ENCODE measurements at regions of chr19 and their contacts with region 1.

Region 1: DNA sequence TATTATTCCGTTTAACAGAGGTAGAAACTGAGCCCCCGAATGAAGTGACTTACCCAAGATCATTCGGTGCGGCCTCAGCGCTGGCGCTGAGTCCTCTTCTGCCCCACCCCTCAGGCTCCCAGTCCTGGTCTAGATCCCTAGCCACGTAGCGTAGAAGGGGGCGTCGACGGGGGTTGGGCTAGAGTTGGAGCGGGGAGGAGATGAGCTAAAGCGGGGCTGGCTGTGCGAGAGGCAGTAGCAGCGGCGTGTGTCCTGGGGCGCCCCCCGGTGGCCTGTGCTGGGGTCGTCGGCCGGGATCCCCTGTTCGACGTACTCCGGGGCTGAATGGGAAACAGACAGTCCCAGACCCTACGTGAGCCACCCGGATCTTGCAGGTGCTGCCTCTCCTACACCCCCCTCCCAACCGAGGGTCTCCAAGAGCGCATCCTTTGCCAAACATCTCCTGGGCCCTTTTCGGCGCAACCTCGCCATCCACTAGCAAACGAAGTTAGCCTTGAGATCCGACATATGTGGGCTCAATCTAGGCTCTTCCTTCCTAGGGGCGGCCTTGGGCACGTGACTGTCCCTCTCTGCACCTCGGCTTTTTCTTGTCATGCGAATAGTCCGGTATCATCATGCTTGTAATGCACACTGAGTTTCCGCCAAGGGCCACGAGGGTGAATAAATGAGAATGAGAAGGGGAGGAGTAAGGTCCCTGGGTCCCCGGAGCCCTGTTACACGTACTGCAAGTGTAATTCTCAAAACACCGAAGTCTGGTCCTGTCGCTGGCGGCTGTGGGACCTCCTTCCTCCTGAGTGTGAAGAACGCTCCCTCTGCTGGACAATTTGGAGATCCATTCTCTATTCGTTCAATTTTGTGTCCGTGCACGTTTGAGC is 47.7 kb downstream of the CYP4F22 start:
- DNase-seq: peak; percentile 99
- H3K4me3 ChIP-seq: peak overlapping the region; percentile 34
- H3K27ac ChIP-seq: peak overlapping the region; percentile 57
- H3K4me1 ChIP-seq: peaks cover 9% of the 10 kb centered on the region
- H3K27me3 ChIP-seq: no peaks in the 10 kb centered on the region
- CTCF ChIP-seq: peak; percentile 89

Region 2: DNA sequence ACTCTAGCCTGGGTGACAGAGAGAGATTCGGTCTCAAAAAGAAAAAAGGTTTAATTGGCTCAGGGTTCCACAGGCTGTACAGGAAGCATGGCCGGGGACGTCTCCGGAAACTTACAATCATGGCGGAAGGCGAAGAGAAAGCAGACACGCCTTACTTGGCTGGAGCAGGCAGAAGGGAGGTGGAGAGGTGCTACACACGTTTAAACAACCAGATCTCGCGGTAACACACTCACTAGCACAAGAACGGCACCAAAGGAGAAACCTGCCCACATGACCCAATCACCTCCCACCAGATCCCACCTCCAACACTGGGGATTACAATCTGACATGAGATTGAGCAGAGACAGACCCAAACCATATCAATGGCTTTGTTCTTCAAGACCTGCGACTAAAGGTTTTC is 494.0 kb before region 1 on chr19:
- CTCF ChIA-PET with region 1: no interaction called
- POLR2A ChIA-PET with region 1: no interaction called
- intact Hi-C with region 1: no loop called
- DNase-seq: no peak
- H3K4me3 ChIP-seq: no peak overlapping the region
- H3K27ac ChIP-seq: no peak overlapping the region
- H3K4me1 ChIP-seq: no peaks in the 10 kb centered on the region
- H3K27me3 ChIP-seq: peaks cover 46% of the 10 kb centered on the region
- CTCF ChIP-seq: no peak

Region 3: DNA sequence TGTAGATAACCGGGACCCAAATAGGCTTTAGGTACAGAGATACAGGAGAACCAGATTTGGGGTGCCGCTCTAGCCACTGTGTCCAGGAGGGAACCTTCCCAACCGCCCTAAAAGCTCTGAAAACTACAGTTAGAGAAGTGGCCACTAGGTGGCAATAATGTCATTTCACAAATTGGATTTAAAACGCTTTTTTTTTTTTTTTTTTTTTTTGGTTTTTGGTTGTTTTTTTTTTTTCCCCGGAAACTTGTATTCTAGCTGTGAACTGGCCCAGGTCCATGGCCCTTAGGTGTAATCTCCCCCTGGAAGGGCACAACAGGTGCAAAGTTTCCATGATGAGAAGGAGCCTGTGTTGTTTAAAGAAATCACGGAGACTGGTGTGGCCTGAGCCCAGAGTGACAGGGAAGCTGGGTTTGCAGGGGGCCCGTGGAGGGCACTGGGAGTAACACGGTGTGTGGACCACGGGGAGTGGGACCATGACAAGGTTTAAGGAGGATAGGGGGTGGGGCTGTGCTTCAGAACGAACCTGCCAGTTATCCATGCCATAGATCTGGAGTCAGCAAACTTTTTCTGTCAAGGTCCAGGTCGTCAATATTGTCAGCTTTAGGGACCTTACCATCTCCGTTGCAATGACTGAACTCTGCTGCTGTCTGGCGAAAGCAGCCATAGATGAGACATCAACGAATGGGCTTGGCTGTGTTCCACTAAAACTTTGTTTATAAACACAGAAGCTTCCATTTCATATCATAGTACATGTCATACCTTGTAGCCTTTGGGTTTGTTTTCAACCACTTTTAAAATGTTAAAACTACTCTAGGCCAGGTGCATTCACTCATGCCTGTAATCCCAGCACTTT is 463.9 kb before region 1 on chr19:
- CTCF ChIA-PET with region 1: interaction called, 5 read pairs
- POLR2A ChIA-PET with region 1: no interaction called
- intact Hi-C with region 1: loop called (anchors 5 kb)
- DNase-seq: peak; percentile 81
- H3K4me3 ChIP-seq: no peak overlapping the region
- H3K27ac ChIP-seq: no peak overlapping the region
- H3K4me1 ChIP-seq: no peaks in the 10 kb centered on the region
- H3K27me3 ChIP-seq: peaks cover 10% of the 10 kb centered on the region
- CTCF ChIP-seq: peak; percentile 78

Region 4: GRCh38 chr19:15264061-15264932 is 291.7 kb before region 1 on chr19:
- CTCF ChIA-PET with region 1: interaction called, 5 read pairs
- POLR2A ChIA-PET with region 1: no interaction called
- intact Hi-C with region 1: loop called (anchors 1 kb)
- DNase-seq: peak; percentile 80
- H3K4me3 ChIP-seq: no peak overlapping the region
- H3K27ac ChIP-seq: peak overlapping the region; percentile 23
- H3K4me1 ChIP-seq: no peaks in the 10 kb centered on the region
- H3K27me3 ChIP-seq: no peaks in the 10 kb centered on the region
- CTCF ChIP-seq: peak; percentile 93

Region 5: DNA sequence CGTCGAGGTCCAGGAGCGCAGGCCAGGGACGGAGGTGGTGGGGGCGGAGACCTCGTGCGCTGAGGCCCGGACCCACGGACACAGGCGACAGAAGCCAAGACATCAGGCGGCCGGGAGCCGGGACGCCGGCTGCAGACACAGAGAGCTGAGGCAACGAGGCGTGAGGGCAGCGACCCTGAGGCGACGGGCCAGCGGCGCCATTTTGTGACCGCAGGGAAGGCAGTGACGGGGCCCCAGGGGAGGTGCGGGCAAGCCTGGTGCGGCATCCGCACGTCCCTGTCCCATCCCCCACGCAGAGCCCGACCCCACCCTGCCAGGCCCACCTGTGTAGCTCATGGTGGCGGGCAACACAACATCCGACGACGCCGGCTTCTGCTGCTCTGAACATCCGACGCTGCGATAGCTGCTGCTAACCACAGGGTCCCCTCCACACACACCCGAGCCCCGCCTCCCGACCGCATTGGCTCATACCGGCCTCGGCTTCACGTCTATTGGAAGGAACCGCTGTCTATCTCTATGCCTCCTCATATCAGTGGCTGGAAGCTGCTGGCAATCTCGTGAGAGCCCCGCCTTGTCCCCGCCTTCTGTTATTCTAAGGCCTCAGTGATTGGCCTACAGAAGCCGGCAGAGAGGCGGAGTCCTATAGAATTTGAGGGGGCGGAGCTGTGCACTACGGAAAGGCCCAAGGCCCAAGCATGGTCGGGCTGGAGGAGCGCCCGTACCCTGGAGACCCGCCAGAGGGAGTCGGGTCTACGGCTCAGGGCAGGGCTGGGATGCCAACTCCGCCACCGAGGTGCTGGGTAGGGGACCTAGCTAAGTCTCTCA is 137.2 kb before region 1 on chr19 and contains the start of gene AKAP8L:
- CTCF ChIA-PET with region 1: interaction called, 17 read pairs
- POLR2A ChIA-PET with region 1: interaction called, 4 read pairs
- intact Hi-C with region 1: loop called (anchors 1 kb)
- DNase-seq: peak; percentile 100
- H3K4me3 ChIP-seq: peak within 1 kb of the TSS; percentile 80
- H3K27ac ChIP-seq: peak within 1 kb of the TSS; percentile 94
- H3K4me1 ChIP-seq: peaks cover 27% of the 10 kb centered on the region
- H3K27me3 ChIP-seq: no peaks in the 10 kb centered on the region
- CTCF ChIP-seq: peak; percentile 86
- total RNA-seq, gene AKAP8L: 132 and 147 TPM in 2 replicates

Measured in A673 (cell line).